Astrocyte of the cerebellum (primary cell): ENCODE measurements at regions of chr2 and their contacts with region 1.

Region 1: GRCh38 chr2:110735366-110735765 is 3.0 kb downstream of the ACOXL start:
- DNase-seq: no peak
- H3K4me3 ChIP-seq: no peak overlapping the region
- CTCF ChIP-seq: no peak

Region 2: GRCh38 chr2:110674620-110675555 is 60.5 kb before region 1 on chr2:
- in situ Hi-C with region 1: no loop called
- DNase-seq: no peak
- H3K4me3 ChIP-seq: no peak overlapping the region
- CTCF ChIP-seq: no peak

Region 3: DNA sequence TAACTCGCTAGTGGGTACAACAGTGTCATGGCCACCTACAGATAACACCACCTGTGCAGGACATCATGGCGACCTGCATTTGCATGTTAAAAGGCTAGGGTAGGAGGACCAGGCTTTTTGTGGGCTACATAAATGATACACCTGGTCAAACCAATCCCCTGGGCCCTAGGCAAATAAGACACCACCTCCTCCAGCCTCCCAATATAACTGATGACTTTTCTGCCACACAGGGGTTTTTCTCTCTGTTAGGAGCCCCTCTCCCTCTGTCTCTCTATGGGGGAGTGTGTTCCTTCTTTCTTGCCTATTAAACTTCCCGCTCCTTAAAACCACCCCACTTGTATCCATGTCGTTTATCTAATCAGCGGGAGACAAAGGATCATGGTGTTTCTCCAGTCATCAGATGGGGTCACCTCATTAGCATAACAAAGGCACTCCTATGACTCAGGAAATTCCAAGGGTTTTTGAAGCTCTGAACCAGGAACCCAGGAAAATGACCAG is 46.7 kb before region 1 on chr2:
- in situ Hi-C with region 1: loop called (anchors 5 kb)
- DNase-seq: peak; percentile 87
- H3K4me3 ChIP-seq: no peak overlapping the region
- CTCF ChIP-seq: no peak

Region 4: DNA sequence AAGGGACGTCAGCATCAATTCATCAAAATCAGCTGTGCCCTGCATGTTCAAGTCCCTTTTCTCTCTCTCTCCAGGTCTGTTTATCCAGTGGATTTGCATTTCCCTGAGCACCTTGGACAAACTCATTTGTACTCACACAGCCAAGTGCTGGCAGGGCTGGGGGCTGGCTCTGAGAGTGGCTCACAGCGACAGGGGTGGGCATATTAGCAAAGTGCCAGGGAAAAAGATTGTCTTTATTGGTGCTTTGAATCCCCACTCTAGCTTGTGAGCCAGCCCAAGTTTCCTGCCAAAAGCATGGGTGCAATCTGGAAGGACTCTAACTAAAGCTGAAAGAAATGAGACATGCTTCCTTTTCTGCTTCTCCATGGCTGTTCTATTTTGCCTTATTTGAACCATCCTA is 53.6 kb after region 1 on chr2:
- in situ Hi-C with region 1: no loop called
- DNase-seq: no peak
- H3K4me3 ChIP-seq: no peak overlapping the region
- CTCF ChIP-seq: no peak